Activated CD4-positive, alpha-beta memory T cell treated with anti-CD3 and anti-CD28 coated beads for 36 hours (primary cell): ENCODE measurements at regions of chr2 and their contacts with region 1.

Region 1: DNA sequence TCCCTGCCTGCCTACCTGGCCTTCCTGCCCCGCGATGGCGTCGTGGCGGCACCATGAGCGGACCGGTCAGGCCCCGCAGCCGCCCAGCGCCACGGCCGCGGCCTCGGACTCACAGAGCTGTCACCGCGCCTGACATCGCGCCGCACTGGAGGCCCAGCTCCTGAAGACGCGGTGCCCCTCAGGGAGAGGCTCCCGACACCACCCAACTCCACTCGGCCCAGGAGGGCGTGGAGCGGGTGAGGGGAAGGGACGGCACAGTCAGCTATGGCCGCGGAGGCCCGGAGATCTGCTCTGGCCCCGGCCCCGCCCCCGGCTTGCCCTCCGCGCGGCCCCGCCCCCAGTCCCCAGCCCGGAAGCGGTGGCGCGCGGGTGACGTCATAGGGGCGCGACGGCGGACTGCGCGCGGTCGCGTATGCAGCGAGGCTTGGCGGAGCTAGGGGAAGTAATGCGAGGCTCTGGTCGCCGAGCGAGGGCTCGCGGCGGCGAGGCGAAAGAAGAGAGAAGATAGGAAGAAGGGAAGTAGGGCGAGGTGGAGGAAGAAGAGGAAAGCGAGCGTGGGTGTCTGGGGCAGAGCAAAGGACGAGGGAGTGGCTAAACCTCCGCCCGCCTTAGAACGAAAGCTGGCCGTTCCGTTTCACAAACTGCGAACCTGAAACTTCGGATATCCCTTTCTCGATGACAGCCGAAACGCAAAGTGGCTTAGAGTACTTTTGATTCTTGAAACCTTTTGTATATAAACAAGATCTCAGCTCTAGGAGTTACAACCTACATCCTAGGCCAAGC is at the start of gene SLC35F5:
- DNase-seq: peak; percentile 95
- H3K4me3 Mint-ChIP-seq: peak within 1 kb of the TSS; percentile 89
- H3K27ac Mint-ChIP-seq: peak within 1 kb of the TSS; percentile 98
- H3K4me1 Mint-ChIP-seq: peaks cover 20% of the 10 kb centered on the region
- H3K27me3 Mint-ChIP-seq: no peaks in the 10 kb centered on the region
- total RNA-seq, gene SLC35F5: 21.7 to 24.3 TPM

Region 2: GRCh38 chr2:113692698-113693428 is 63.7 kb before region 1 on chr2:
- CTCF ChIA-PET with region 1: no interaction called
- POLR2A ChIA-PET with region 1: interaction called, 3 read pairs
- intact Hi-C with region 1: loop called (anchors 1 kb)
- DNase-seq: peak; percentile 63
- H3K4me3 Mint-ChIP-seq: peak overlapping the region; percentile 71
- H3K27ac Mint-ChIP-seq: peak overlapping the region; percentile 95
- H3K4me1 Mint-ChIP-seq: peaks cover 42% of the 10 kb centered on the region
- H3K27me3 Mint-ChIP-seq: no peaks in the 10 kb centered on the region

Region 3: DNA sequence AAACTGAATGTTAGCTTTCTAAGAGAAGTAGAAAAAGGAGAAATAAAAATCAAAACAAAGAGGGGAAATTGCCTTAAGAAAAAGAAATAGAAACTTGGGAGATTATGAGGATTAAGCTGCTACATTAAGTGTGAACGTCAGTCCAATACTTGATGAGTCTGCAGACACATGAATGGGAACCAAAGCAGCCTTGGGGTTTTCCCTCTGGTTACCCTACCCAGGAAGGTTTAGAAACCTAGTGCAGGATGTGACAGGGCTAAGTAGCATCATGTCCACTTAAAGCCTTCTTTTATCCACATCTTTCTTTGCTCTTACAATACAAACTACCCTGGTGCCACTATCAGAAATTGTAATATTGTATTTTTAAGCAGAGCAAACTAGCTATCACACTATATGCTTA is 22.4 kb before region 1 on chr2:
- CTCF ChIA-PET with region 1: no interaction called
- POLR2A ChIA-PET with region 1: no interaction called
- intact Hi-C with region 1: no loop called
- DNase-seq: peak; percentile 24
- H3K4me3 Mint-ChIP-seq: no peak overlapping the region
- H3K27ac Mint-ChIP-seq: no peak overlapping the region
- H3K4me1 Mint-ChIP-seq: peaks cover 9% of the 10 kb centered on the region
- H3K27me3 Mint-ChIP-seq: no peaks in the 10 kb centered on the region

Region 4: GRCh38 chr2:113848758-113849415 is 92.3 kb after region 1 on chr2:
- CTCF ChIA-PET with region 1: no interaction called
- POLR2A ChIA-PET with region 1: interaction called, 9 read pairs
- intact Hi-C with region 1: loop called (anchors 1 kb)
- DNase-seq: peak; percentile 70
- H3K4me3 Mint-ChIP-seq: peak overlapping the region; percentile 30
- H3K27ac Mint-ChIP-seq: peak overlapping the region; percentile 87
- H3K4me1 Mint-ChIP-seq: peaks cover 21% of the 10 kb centered on the region
- H3K27me3 Mint-ChIP-seq: no peaks in the 10 kb centered on the region

Region 5: GRCh38 chr2:113889471-113890252 is 133.1 kb after region 1 on chr2 and contains the start of gene ACTR3:
- CTCF ChIA-PET with region 1: interaction called, 4 read pairs
- POLR2A ChIA-PET with region 1: interaction called, 16 read pairs
- intact Hi-C with region 1: loop called (anchors 1 kb)
- DNase-seq: peak; percentile 99
- H3K4me3 Mint-ChIP-seq: peak within 1 kb of the TSS; percentile 89
- H3K27ac Mint-ChIP-seq: peak within 1 kb of the TSS; percentile 94
- H3K4me1 Mint-ChIP-seq: peaks cover 70% of the 10 kb centered on the region
- H3K27me3 Mint-ChIP-seq: no peaks in the 10 kb centered on the region
- total RNA-seq, gene ACTR3: 653 to 668 TPM

Region 6: GRCh38 chr2:113977660-113978523 is 221.3 kb after region 1 on chr2:
- CTCF ChIA-PET with region 1: interaction called, 14 read pairs
- POLR2A ChIA-PET with region 1: no interaction called
- intact Hi-C with region 1: no loop called
- DNase-seq: no peak
- H3K4me3 Mint-ChIP-seq: no peak overlapping the region
- H3K27ac Mint-ChIP-seq: no peak overlapping the region
- H3K4me1 Mint-ChIP-seq: peaks cover 4% of the 10 kb centered on the region
- H3K27me3 Mint-ChIP-seq: no peaks in the 10 kb centered on the region

Region 7: GRCh38 chr2:114022360-114023085 is 266.0 kb after region 1 on chr2:
- CTCF ChIA-PET with region 1: no interaction called
- POLR2A ChIA-PET with region 1: no interaction called
- intact Hi-C with region 1: no loop called
- DNase-seq: no peak
- H3K4me3 Mint-ChIP-seq: no peak overlapping the region
- H3K27ac Mint-ChIP-seq: no peak overlapping the region
- H3K4me1 Mint-ChIP-seq: no peaks in the 10 kb centered on the region
- H3K27me3 Mint-ChIP-seq: peaks cover 11% of the 10 kb centered on the region